GM12878 (cell line): ENCODE measurements at regions of chr15 and their contacts with region 1.

Region 1: DNA sequence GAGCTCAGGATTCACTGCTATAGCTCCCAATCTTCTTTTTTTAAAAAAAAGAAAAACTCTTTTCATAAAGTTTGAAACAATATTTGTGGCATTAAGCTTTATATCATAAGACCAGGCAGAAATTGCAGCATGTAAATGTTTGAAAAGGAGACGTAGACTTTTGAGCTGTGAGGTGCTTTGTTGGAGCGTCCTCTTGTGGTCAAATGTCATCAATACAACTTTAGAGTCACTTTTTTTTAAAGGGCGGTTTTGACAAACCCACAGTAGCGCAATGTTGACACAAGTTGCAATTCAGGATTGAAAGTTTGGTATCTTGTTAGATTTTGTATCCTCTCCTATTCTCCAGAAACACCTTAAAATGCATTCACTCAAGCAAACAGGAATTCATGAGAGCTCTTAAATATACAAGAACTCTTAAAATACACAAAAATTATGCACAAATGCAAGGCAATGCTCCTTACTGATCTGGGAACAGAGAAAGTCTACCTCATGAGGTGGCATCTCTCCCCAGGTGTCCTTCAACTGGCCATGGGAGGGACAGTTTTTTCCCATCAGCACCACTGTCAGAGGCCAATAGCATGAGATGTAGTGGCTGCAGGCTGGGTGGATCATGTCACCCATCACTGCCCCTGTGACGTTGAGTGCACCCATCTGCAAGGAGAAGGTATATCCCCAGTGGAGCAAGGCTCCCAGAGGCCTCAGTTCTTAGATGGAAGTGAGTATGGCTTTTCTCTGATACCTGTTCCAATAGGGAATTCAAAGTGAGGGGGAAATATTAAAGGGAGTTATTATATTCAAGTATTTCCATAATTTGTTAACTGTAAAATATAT is 70.7 kb downstream of the ANXA2 start:
- DNase-seq: no peak
- ATAC-seq: peak; percentile 46; the same call in 2 of the 3 replicates
- H3K4me3 ChIP-seq: no peak overlapping the region
- H3K27ac ChIP-seq: no peak overlapping the region
- H3K4me1 ChIP-seq: no peaks in the 10 kb centered on the region
- H3K27me3 ChIP-seq: peaks cover 0 to 3% of the 10 kb centered on the region in 2 experiments; a peak in 2 of 4 replicates
- CTCF ChIP-seq: peak; percentile 69 to 79 (median 78)
- EP300 ChIP-seq: no peak
- POLR2A ChIP-seq: no peak
- RAD21 ChIP-seq: peak; percentile 90

Region 2: DNA sequence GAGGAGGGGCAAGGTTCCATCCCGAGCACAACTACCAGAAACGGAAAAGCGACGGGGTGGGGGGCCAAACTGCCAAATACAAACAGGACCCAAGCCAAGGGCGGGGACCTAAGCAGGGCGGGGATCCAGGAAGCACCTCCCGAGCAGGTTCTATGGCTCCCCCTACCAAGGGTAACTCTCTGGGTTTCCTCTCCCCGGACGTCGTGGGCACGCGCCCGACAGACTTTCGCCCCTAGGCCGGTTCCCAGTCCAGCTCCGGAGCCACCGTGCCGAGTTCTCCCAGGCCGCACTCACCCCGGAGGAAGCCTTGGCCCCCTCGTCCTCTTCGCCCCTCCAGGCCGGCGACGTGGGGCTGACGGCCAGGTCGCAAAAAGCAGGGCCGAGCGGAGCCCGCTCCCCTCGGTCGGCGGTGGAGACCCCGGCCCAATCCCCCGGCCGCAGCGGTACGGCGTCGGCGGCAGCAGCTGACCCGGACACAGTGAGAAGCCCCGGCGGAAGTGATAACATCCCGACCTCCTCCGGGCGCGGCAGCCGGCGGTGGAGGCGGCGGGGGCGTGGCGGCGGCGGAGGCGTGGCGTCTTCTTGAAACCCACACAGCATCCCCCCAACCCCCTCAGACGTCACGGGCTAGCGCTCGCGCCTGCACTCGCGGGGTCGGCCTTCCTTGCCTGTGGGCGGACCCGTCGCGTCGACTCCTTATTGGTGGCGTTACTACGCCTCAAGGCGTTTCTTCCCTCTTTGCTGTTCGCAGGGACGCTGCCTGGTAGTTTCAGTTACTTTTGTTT is 638.0 kb before region 1 on chr15 and contains the start of gene BNIP2:
- CTCF ChIA-PET with region 1: interaction called, 25 read pairs
- POLR2A ChIA-PET with region 1: no interaction called
- RAD21 ChIA-PET with region 1: interaction called, 24 read pairs
- SMC1A ChIA-PET with region 1: interaction called, 9 read pairs
- in situ Hi-C with region 1: no loop called
- intact Hi-C with region 1: loop called (anchors 10 kb)
- DNase-seq: peak; percentile 92
- ATAC-seq: peak; percentile 91
- H3K4me3 ChIP-seq: peak within 1 kb of the TSS; percentile 94
- H3K27ac ChIP-seq: peak within 1 kb of the TSS; percentile 98
- H3K4me1 ChIP-seq: peaks cover 9% of the 10 kb centered on the region
- H3K27me3 ChIP-seq: no peaks in the 10 kb centered on the region
- CTCF ChIP-seq: no peak
- EP300 ChIP-seq: no peak
- POLR2A ChIP-seq: peak; percentile 90
- RAD21 ChIP-seq: no peak
- polyA plus RNA-seq, gene BNIP2: 29.9 to 58.5 TPM

Region 3: DNA sequence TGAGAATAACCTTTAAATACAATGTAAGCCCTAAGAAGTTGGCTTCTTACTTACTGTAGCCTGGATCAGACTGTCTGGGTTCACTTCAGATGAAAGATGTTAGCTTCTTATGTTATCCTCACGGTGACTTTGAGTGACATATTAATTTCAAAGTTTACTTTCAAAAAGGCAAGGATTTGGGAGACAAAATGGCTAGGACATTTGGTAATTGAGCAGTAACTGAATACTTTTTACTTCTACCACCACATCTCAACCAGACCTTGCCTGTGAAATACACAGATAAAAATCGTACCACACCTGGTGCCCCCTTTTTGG is 601.9 kb before region 1 on chr15:
- CTCF ChIA-PET with region 1: interaction called, 32 read pairs
- POLR2A ChIA-PET with region 1: no interaction called
- RAD21 ChIA-PET with region 1: interaction called, 25 read pairs
- SMC1A ChIA-PET with region 1: interaction called, 16 read pairs
- in situ Hi-C with region 1: no loop called
- intact Hi-C with region 1: loop called (anchors 1 kb)
- DNase-seq: no peak
- ATAC-seq: no peak
- H3K4me3 ChIP-seq: no peak overlapping the region
- H3K27ac ChIP-seq: no peak overlapping the region
- H3K4me1 ChIP-seq: no peaks in the 10 kb centered on the region
- H3K27me3 ChIP-seq: peaks cover 2 to 4% of the 10 kb centered on the region in 2 experiments; a peak in 2 of 4 replicates
- CTCF ChIP-seq: no peak
- EP300 ChIP-seq: no peak
- POLR2A ChIP-seq: no peak
- RAD21 ChIP-seq: no peak

Region 4: DNA sequence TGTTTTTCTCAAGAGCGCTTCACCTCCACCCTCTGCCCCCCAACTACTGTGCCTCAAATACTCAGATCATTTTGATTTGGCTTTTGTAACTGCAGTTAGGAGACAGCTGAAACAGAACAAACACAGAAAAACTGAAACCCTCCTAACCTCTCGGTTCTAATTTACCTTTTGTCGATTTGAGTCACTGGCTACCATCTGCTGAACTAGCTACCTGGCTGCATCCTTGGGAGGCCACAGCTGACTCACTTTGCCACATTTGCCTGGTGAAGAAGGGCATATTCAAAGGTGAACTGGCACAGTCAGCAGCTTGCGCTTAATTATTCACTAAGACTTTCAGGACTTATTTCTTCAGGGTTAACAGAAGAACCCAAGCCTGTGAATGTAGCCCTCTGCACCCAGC is 205.2 kb before region 1 on chr15:
- CTCF ChIA-PET with region 1: no interaction called
- POLR2A ChIA-PET with region 1: no interaction called
- RAD21 ChIA-PET with region 1: no interaction called
- SMC1A ChIA-PET with region 1: interaction called, 3 read pairs
- in situ Hi-C with region 1: no loop called
- intact Hi-C with region 1: loop called (anchors 5 kb)
- DNase-seq: peak; percentile 15
- ATAC-seq: peak; percentile 75
- H3K4me3 ChIP-seq: no peak overlapping the region
- H3K27ac ChIP-seq: no peak overlapping the region
- H3K4me1 ChIP-seq: peaks cover 25% of the 10 kb centered on the region
- H3K27me3 ChIP-seq: no peaks in the 10 kb centered on the region
- CTCF ChIP-seq: no peak
- EP300 ChIP-seq: no peak
- POLR2A ChIP-seq: no peak
- RAD21 ChIP-seq: no peak

Region 5: DNA sequence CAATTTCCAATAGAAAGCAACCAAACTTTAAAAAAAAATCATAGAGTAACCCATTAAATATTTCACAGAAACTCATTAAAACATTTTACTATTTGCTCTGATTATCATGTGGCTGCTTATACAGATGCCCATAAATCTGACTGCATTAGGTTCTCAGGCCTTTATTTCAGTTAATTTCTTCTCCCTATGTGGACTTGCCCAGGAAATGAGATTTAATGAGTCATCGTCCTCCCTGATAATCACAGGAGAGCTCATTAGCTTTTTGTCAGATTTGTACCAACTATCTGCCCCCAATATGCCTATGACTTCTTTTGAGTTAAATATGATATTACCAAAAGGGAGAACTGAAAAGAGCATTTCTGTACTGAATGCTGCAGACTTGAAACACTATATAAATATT is 154.9 kb before region 1 on chr15:
- CTCF ChIA-PET with region 1: no interaction called
- POLR2A ChIA-PET with region 1: no interaction called
- RAD21 ChIA-PET with region 1: no interaction called
- SMC1A ChIA-PET with region 1: no interaction called
- in situ Hi-C with region 1: no loop called
- intact Hi-C with region 1: no loop called
- DNase-seq: no peak
- ATAC-seq: no peak
- H3K4me3 ChIP-seq: no peak overlapping the region
- H3K27ac ChIP-seq: no peak overlapping the region
- H3K4me1 ChIP-seq: no peaks in the 10 kb centered on the region
- H3K27me3 ChIP-seq: no peaks in the 10 kb centered on the region
- CTCF ChIP-seq: no peak
- EP300 ChIP-seq: no peak
- POLR2A ChIP-seq: no peak
- RAD21 ChIP-seq: no peak

Region 6: GRCh38 chr15:60340207-60340921 is 13.3 kb after region 1 on chr15:
- CTCF ChIA-PET with region 1: interaction called, 11 read pairs
- POLR2A ChIA-PET with region 1: no interaction called
- RAD21 ChIA-PET with region 1: interaction called, 3 read pairs
- SMC1A ChIA-PET with region 1: interaction called, 3 read pairs
- in situ Hi-C with region 1: no loop called
- intact Hi-C with region 1: no loop called
- DNase-seq: no peak
- ATAC-seq: no peak
- H3K4me3 ChIP-seq: no peak overlapping the region
- H3K27ac ChIP-seq: no peak overlapping the region
- H3K4me1 ChIP-seq: no peaks in the 10 kb centered on the region
- H3K27me3 ChIP-seq: no peaks in the 10 kb centered on the region
- CTCF ChIP-seq: no peak
- EP300 ChIP-seq: no peak
- POLR2A ChIP-seq: no peak
- RAD21 ChIP-seq: no peak

Region 7: GRCh38 chr15:60351066-60351465 is 24.0 kb after region 1 on chr15:
- CTCF ChIA-PET with region 1: no interaction called
- POLR2A ChIA-PET with region 1: no interaction called
- RAD21 ChIA-PET with region 1: no interaction called
- SMC1A ChIA-PET with region 1: no interaction called
- in situ Hi-C with region 1: no loop called
- intact Hi-C with region 1: no loop called
- DNase-seq: no peak
- ATAC-seq: no peak
- H3K4me3 ChIP-seq: no peak overlapping the region
- H3K27ac ChIP-seq: no peak overlapping the region
- H3K4me1 ChIP-seq: no peaks in the 10 kb centered on the region
- H3K27me3 ChIP-seq: no peaks in the 10 kb centered on the region
- CTCF ChIP-seq: no peak
- EP300 ChIP-seq: no peak
- POLR2A ChIP-seq: no peak
- RAD21 ChIP-seq: no peak